Right cardiac atrium (tissue), 5 donors: ENCODE measurements at regions of chr5 and their contacts with region 1.

Region 1: GRCh38 chr5:171336521-171337209 is 27.6 kb downstream of the TLX3 start:
- DNase-seq: peak in 2 of 3 donors; percentile 31 to 74
- ATAC-seq: peak; percentile 78 to 79
- H3K4me3 ChIP-seq: peak overlapping the region; percentile 38
- H3K27ac ChIP-seq: no peak overlapping the region
- H3K4me1 ChIP-seq: no peaks in the 10 kb centered on the region
- H3K27me3 ChIP-seq: peaks cover 3% of the 10 kb centered on the region

Region 2: DNA sequence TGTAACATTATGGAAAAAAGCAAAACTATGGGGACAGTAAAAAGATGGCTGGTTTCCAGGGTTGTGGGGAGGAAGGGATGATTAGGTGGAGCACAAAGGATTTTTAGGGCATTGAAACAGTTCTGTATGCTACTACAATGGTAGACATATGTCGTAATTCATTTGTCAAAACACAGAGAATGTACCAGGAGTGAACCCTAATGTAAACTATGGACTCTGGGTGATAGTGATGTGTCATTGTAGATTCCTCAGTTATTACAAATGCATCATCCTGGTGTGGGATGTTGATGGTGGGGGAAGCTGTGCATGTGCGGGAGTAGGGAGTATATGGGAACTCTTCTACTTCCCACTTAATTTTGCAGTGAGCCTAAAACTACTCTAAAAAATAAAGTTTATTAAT is 688.1 kb before region 1 on chr5:
- intact Hi-C with region 1: loop called in 1 of 4 experiments (anchors 10 kb)
- DNase-seq: no peak
- ATAC-seq: no peak
- H3K4me3 ChIP-seq: no peak overlapping the region
- H3K27ac ChIP-seq: no peak overlapping the region
- H3K4me1 ChIP-seq: no peaks in the 10 kb centered on the region
- H3K27me3 ChIP-seq: no peaks in the 10 kb centered on the region

Region 3: DNA sequence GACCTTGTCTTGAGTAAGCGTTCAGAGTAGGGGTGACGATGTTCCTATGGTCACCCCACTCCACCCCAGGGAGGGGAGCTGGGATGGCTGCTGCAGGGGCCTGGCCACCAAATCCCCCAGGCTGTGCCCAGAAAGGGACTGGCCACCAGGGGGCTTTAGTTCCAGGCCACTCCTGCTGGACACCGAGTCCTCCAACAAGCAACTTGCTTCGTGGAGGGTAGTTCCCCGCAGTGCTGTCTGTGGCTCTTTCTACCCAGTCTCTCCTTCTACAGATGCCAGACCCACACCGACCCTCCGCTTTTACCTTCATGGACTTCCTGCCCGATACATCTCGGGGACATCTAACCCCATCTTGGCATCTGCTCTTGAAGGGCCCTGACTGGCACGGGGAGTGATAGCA is 588.8 kb before region 1 on chr5:
- intact Hi-C with region 1: loop called in 1 of 4 experiments (anchors 10 kb)
- DNase-seq: peak in 1 of 3 donors; percentile 55
- ATAC-seq: no peak
- H3K4me3 ChIP-seq: no peak overlapping the region
- H3K27ac ChIP-seq: peak overlapping the region; percentile 63
- H3K4me1 ChIP-seq: peaks cover 3% of the 10 kb centered on the region
- H3K27me3 ChIP-seq: no peaks in the 10 kb centered on the region

Region 4: GRCh38 chr5:171188016-171188415 is 148.6 kb before region 1 on chr5:
- intact Hi-C with region 1: no loop called
- DNase-seq: no peak
- ATAC-seq: no peak
- H3K4me3 ChIP-seq: no peak overlapping the region
- H3K27ac ChIP-seq: no peak overlapping the region
- H3K4me1 ChIP-seq: no peaks in the 10 kb centered on the region
- H3K27me3 ChIP-seq: no peaks in the 10 kb centered on the region

Region 5: GRCh38 chr5:171207256-171207847 is 129.3 kb before region 1 on chr5:
- intact Hi-C with region 1: loop called in 3 of 4 experiments (anchors 5 kb)
- DNase-seq: no peak
- ATAC-seq: peak in 1 of 2 donors; percentile 20
- H3K4me3 ChIP-seq: no peak overlapping the region
- H3K27ac ChIP-seq: no peak overlapping the region
- H3K4me1 ChIP-seq: no peaks in the 10 kb centered on the region
- H3K27me3 ChIP-seq: no peaks in the 10 kb centered on the region